GM12878 (cell line): ENCODE measurements at regions of chr2 and their contacts with region 1.

Region 1: DNA sequence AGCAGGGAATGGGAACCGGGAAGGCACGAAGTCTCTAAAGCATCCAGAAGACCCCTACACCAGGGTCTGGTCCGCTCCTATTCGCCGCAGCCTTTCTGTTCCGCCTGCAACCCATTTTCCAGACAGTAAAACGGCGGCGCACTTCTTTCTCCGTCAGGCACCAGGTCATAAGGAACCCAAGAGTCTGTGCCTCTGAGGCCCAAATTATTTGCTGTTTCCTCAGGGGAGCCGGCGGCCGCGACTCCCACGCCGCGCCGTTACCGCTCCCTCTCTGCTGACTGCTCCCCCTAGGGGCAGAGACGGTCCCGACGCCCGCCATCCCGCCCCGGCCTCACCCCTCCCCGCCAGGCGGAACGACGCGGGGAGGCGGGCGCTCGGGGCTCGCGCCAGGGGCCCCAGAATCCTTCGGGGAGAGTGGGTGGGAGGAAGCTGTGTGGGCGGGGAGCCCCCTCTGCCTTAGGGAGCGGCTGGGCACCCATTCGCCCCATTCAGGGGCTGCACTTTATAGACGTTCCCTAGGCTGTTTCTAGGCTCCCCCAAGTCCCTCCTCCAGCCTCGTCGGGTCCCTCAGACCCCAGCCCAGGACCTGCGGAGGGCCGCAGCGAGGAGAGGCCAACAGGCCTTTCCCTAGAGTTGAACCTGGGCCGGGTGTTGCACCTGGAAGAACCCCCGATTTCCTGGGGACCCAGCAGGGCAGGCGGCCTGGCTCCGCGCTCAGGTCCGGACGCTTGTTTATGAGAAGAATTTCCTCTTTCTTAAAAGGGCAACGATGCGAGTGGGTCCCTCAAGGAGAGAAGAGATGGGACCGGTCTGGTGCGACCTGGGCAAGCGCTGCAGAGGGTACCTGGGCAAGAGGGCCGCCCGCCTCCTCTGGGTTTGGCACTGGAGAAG is 3.6 kb upstream of the CTDSP1 start:
- DNase-seq: peak; percentile 84
- ATAC-seq: peak; percentile 65
- H3K4me3 ChIP-seq: peak overlapping the region; percentile 84
- H3K27ac ChIP-seq: peak overlapping the region; percentile 96
- H3K4me1 ChIP-seq: peaks cover 27% of the 10 kb centered on the region
- H3K27me3 ChIP-seq: no peaks in the 10 kb centered on the region
- CTCF ChIP-seq: peak; percentile 75 to 87 (median 80)
- EP300 ChIP-seq: peak; percentile 34 to 72; a peak in 1 of 4 replicates
- POLR2A ChIP-seq: peak; percentile 57
- RAD21 ChIP-seq: peak; percentile 50

Region 2: GRCh38 chr2:218269899-218270720 is 125.9 kb before region 1 on chr2 and contains the starts of genes AAMP and PNKD:
- CTCF ChIA-PET with region 1: interaction called, 24 read pairs
- POLR2A ChIA-PET with region 1: interaction called, 12 read pairs
- RAD21 ChIA-PET with region 1: interaction called, 7 read pairs
- SMC1A ChIA-PET with region 1: interaction called, 18 read pairs
- in situ Hi-C with region 1: loop called (anchors 25 kb)
- intact Hi-C with region 1: loop called (anchors 1 kb)
- DNase-seq: peak; percentile 96
- ATAC-seq: peak; percentile 92
- H3K4me3 ChIP-seq: peak within 1 kb of the TSS; percentile 90
- H3K27ac ChIP-seq: peak within 1 kb of the TSS; percentile 74
- H3K4me1 ChIP-seq: peaks cover 18% of the 10 kb centered on the region
- H3K27me3 ChIP-seq: no peaks in the 10 kb centered on the region
- CTCF ChIP-seq: peak in 2 of 3 experiments; percentile 10 to 33; a peak in 2 of 6 replicates
- EP300 ChIP-seq: no peak
- POLR2A ChIP-seq: peak; percentile 89
- RAD21 ChIP-seq: no peak
- polyA plus RNA-seq, gene AAMP: 4.4 to 5.5 TPM
- polyA plus RNA-seq, gene PNKD: 72.6 to 104 TPM

Region 3: DNA sequence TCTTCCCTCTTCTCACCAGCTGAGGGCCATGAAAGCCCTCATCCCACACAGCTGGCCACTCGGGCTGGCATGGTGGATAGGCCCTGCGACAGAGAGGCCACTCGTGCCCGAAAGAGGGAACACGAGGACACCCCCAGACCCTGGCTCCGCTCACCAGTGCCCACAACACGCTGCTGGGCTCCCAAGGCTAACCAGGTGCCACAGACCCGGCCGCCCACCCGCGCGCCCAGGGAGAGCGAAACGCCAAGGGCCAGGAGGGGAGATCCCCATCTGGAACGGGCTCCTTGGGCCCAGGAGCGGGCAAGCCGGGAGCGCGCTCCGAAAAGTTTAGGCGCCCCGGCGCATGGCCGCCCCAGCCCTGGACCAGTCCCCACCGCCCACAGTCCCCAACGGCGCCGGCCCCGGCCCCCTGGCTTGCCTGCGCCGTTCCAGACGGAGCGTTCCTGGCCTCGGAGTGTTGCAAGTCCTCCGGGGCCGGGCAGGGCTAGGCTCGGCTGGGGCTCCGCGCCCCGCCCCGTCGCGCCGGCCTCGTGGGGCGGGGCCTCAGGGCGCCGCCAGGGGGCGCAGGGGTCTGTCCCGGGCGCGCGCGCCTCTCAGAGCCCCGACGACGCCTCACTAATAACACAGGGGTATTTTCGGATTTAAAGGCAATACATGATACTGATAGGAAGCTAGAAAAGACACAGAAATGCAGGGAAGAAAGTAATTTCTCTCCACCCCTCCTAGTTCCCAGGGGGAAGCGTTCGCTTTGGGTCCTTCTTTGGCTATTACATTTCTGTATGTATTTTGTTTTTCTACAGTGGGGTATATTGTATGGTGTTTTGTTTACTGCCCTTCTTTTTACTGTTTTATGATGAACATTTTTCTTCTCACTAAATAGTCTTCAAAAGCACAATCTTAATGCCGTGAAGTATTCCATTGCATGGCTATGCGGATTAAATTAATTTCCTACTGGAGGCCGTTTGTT is 103.7 kb before region 1 on chr2 and contains the start of gene TMBIM1:
- CTCF ChIA-PET with region 1: interaction called, 27 read pairs
- POLR2A ChIA-PET with region 1: interaction called, 19 read pairs
- RAD21 ChIA-PET with region 1: interaction called, 14 read pairs
- SMC1A ChIA-PET with region 1: interaction called, 4 read pairs
- in situ Hi-C with region 1: loop called (anchors 25 kb)
- intact Hi-C with region 1: loop called (anchors 2 kb)
- DNase-seq: no peak
- ATAC-seq: peak; percentile 87
- H3K4me3 ChIP-seq: peak within 1 kb of the TSS; percentile 85
- H3K27ac ChIP-seq: peak within 1 kb of the TSS; percentile 72
- H3K4me1 ChIP-seq: peaks cover 28% of the 10 kb centered on the region
- H3K27me3 ChIP-seq: no peaks in the 10 kb centered on the region
- CTCF ChIP-seq: peak; percentile 68 to 92 (median 85)
- EP300 ChIP-seq: no peak
- POLR2A ChIP-seq: peak; percentile 58
- RAD21 ChIP-seq: peak; percentile 51
- polyA plus RNA-seq, gene TMBIM1: 6.1 to 11.7 TPM

Region 4: GRCh38 chr2:218329027-218329825 is 66.8 kb before region 1 on chr2:
- CTCF ChIA-PET with region 1: interaction called, 5 read pairs
- POLR2A ChIA-PET with region 1: interaction called, 19 read pairs
- RAD21 ChIA-PET with region 1: interaction called, 4 read pairs
- SMC1A ChIA-PET with region 1: interaction called, 8 read pairs
- in situ Hi-C with region 1: no loop called
- intact Hi-C with region 1: no loop called
- DNase-seq: peak; percentile 77
- ATAC-seq: peak; percentile 81
- H3K4me3 ChIP-seq: peak overlapping the region; percentile 12; the same call in 1 of the 2 replicates
- H3K27ac ChIP-seq: peak overlapping the region; percentile 77
- H3K4me1 ChIP-seq: peaks cover 49% of the 10 kb centered on the region
- H3K27me3 ChIP-seq: no peaks in the 10 kb centered on the region
- CTCF ChIP-seq: no peak
- EP300 ChIP-seq: 0 out of 4 replicates have a peak, but pooled peaks of 1 of the 2 experiments have one; percentile 39
- POLR2A ChIP-seq: no peak
- RAD21 ChIP-seq: no peak

Region 5: DNA sequence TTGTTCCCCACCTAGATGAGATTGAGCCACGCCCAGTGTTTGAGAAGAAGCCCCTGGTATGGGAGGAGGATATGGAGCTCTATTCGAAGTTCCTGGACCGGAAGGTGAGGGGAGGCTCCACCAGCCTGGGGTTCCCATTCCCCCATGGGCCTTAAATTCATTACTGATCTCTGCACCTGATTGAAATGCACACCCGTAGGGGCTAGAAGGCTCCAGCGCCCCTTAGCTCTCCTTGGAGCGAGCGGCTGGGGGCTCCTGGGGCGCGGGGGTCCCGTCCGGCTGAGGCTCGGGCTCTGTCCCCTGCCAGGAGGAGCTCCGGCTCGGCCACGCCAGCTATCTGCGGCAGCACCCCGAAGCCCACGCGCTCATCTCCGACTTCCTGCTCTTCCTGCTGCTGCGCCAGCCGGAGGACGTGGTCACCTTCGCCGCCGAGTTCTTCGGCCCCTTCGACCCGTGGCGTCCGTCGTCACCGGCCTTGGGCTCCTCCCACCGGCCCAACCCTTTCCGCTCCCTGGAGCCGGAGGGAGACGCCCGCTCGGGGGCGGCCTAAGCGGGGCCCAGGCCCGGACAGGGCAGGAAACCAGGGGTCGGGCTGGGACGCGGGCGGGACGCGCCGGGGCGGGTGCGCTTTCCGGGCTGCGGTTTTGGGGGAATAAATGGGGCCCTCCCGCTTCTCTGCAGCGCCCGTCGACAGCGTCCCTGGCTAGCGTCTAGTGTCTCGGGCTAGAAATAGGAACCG is 28.5 kb before region 1 on chr2:
- CTCF ChIA-PET with region 1: interaction called, 7 read pairs
- POLR2A ChIA-PET with region 1: interaction called, 3 read pairs
- RAD21 ChIA-PET with region 1: interaction called, 3 read pairs
- SMC1A ChIA-PET with region 1: no interaction called
- in situ Hi-C with region 1: no loop called
- intact Hi-C with region 1: loop called (anchors 2 kb)
- DNase-seq: peak; percentile 51
- ATAC-seq: peak; percentile 99
- H3K4me3 ChIP-seq: peak overlapping the region; percentile 56
- H3K27ac ChIP-seq: peak overlapping the region; percentile 36; the same call in 1 of the 2 replicates
- H3K4me1 ChIP-seq: peaks cover 8% of the 10 kb centered on the region
- H3K27me3 ChIP-seq: no peaks in the 10 kb centered on the region
- CTCF ChIP-seq: no peak
- EP300 ChIP-seq: no peak
- POLR2A ChIP-seq: peak; percentile 92
- RAD21 ChIP-seq: no peak

Region 6: GRCh38 chr2:218568190-218569037 is 172.4 kb after region 1 on chr2 and contains the starts of genes CNOT9 and USP37:
- CTCF ChIA-PET with region 1: interaction called, 3 read pairs
- POLR2A ChIA-PET with region 1: no interaction called
- RAD21 ChIA-PET with region 1: no interaction called
- SMC1A ChIA-PET with region 1: no interaction called
- in situ Hi-C with region 1: no loop called
- intact Hi-C with region 1: loop called (anchors 2 kb)
- DNase-seq: peak; percentile 94
- ATAC-seq: peak; percentile 84
- H3K4me3 ChIP-seq: peak within 1 kb of the TSS; percentile 95
- H3K27ac ChIP-seq: peak within 1 kb of the TSS; percentile 98
- H3K4me1 ChIP-seq: peaks cover 8% of the 10 kb centered on the region; the same call in 1 of the 2 replicates
- H3K27me3 ChIP-seq: no peaks in the 10 kb centered on the region
- CTCF ChIP-seq: no peak
- EP300 ChIP-seq: no peak
- POLR2A ChIP-seq: peak; percentile 88
- RAD21 ChIP-seq: no peak
- polyA plus RNA-seq, gene CNOT9: 51.0 to 58.5 TPM
- polyA plus RNA-seq, gene USP37: 2.8 to 4.1 TPM